HCT116 (cell line): ENCODE measurements at regions of chr11 and their contacts with region 1.

Region 1: DNA sequence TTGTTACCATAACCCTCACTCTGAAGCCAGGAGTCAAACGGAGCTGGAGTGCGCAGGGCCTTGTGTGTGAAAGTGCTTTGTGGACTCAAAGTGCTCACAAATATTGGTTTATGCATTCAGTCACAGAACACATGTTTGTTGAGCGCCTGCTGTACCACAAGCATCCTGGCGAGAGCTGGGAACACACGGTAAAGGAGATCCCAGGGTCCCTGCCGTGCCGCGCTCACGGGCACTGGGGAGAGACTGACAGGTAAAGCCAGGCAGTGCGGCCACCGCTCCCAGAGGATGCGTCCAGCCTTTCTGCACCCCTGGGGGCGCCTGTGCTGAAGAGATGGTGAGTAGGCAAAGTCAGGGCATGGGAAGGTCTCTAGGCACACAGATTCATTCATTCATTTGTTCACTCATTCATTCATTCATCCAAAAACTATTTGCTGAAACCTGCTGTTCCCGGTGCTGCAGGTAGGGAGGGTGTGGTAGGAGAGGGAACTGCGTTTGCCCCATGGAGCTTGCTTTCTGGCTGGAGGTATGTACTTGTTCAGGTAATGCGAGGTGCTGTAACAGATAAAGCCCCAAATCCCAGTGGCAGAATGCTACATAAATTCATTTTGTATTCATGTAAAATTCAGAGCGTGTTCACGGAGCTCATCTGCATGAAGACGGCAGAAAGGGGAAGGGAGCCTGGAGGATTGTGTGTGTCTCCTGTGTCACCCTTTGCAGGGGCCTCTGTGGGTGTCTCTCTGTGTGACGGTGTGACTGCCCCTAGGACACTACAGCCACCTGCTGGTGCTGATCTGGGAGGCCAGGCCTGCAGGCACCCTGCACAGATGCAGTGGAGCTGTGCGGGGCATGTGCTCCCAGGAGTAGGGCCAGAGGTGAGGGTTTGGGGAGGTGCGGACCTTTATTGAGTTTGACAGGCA is 167.0 kb upstream of the B3GAT1 start:
- DNase-seq: peak; percentile 18
- ATAC-seq: peak; percentile 86
- H3K4me3 ChIP-seq: 0 out of 4 replicates have a peak overlapping the region, but pooled peaks of 1 of the 2 experiments have one; percentile 44
- H3K27ac ChIP-seq: no peak overlapping the region
- H3K4me1 ChIP-seq: peaks cover 9 to 13% of the 10 kb centered on the region in 2 experiments
- H3K27me3 ChIP-seq: no peaks in the 10 kb centered on the region
- CTCF ChIP-seq: peak; percentile 26 to 58 (median 36); a peak in 3 of 6 replicates
- POLR2A ChIP-seq: no peak
- RAD21 ChIP-seq: peak; percentile 66

Region 2: GRCh38 chr11:134253188-134253993 is 325.7 kb before region 1 on chr11 and contains the starts of genes ACAD8 and THYN1:
- CTCF ChIA-PET with region 1: no interaction called
- POLR2A ChIA-PET with region 1: no interaction called
- RAD21 ChIA-PET with region 1: no interaction called
- intact Hi-C with region 1: loop called (anchors 10 kb)
- DNase-seq: peak; percentile 90
- ATAC-seq: peak; percentile 99
- H3K4me3 ChIP-seq: peak within 1 kb of the TSS; percentile 73 to 79
- H3K27ac ChIP-seq: peak within 1 kb of the TSS; percentile 47; the same call in 1 of the 2 replicates
- H3K4me1 ChIP-seq: peaks cover 2 to 9% of the 10 kb centered on the region in 2 experiments; a peak in 2 of 4 replicates
- H3K27me3 ChIP-seq: no peaks in the 10 kb centered on the region
- CTCF ChIP-seq: no peak
- POLR2A ChIP-seq: peak; percentile 86
- RAD21 ChIP-seq: no peak
- total RNA-seq, gene ACAD8: 21.0 TPM
- total RNA-seq, gene THYN1: 32.2 TPM

Region 3: GRCh38 chr11:134350381-134350780 is 228.7 kb before region 1 on chr11:
- CTCF ChIA-PET with region 1: no interaction called
- POLR2A ChIA-PET with region 1: no interaction called
- RAD21 ChIA-PET with region 1: no interaction called
- intact Hi-C with region 1: no loop called
- DNase-seq: no peak
- ATAC-seq: no peak
- H3K4me3 ChIP-seq: no peak overlapping the region
- H3K27ac ChIP-seq: no peak overlapping the region
- H3K4me1 ChIP-seq: no peaks in the 10 kb centered on the region
- H3K27me3 ChIP-seq: no peaks in the 10 kb centered on the region
- CTCF ChIP-seq: no peak
- POLR2A ChIP-seq: no peak
- RAD21 ChIP-seq: no peak

Region 4: DNA sequence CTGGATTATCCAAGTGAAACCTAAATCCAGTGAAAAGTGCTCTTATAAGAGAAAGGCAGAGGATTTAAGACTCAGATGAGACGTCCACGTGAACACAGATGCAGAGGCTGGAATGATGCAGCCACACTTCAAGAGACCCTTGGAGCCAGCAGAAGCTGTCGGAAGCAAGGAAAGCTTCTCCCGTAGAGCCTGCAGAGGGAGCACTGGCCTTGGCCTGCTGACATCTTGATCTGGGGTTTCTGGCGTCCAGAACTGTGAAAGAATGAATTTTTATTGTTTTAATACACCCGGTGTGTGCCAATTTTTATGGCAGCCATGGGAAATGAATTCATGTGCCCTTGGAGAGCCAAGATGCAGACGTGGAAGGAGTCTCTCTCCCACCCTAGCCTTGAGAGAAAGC is 240.0 kb after region 1 on chr11:
- CTCF ChIA-PET with region 1: no interaction called
- POLR2A ChIA-PET with region 1: no interaction called
- RAD21 ChIA-PET with region 1: no interaction called
- intact Hi-C with region 1: no loop called
- DNase-seq: no peak
- ATAC-seq: peak; percentile 56; the same call in 1 of the 2 replicates
- H3K4me3 ChIP-seq: no peak overlapping the region
- H3K27ac ChIP-seq: no peak overlapping the region
- H3K4me1 ChIP-seq: peaks cover 6 to 29% of the 10 kb centered on the region in 2 experiments; a peak in 3 of 4 replicates
- H3K27me3 ChIP-seq: peaks cover 41% of the 10 kb centered on the region
- CTCF ChIP-seq: peak; percentile 10 to 39 (median 37); a peak in 4 of 6 replicates
- POLR2A ChIP-seq: no peak
- RAD21 ChIP-seq: no peak